Right cardiac atrium (tissue), 5 donors: ENCODE measurements at regions of chr2 and their contacts with region 1.

Region 1: GRCh38 chr2:64488050-64488974 is 34.4 kb downstream of the LGALSL start:
- DNase-seq: peak; percentile 51 to 86 (median 84)
- ATAC-seq: peak; percentile 38 to 71
- H3K4me3 ChIP-seq: no peak overlapping the region
- H3K27ac ChIP-seq: no peak overlapping the region
- H3K4me1 ChIP-seq: no peaks in the 10 kb centered on the region
- H3K27me3 ChIP-seq: no peaks in the 10 kb centered on the region

Region 2: DNA sequence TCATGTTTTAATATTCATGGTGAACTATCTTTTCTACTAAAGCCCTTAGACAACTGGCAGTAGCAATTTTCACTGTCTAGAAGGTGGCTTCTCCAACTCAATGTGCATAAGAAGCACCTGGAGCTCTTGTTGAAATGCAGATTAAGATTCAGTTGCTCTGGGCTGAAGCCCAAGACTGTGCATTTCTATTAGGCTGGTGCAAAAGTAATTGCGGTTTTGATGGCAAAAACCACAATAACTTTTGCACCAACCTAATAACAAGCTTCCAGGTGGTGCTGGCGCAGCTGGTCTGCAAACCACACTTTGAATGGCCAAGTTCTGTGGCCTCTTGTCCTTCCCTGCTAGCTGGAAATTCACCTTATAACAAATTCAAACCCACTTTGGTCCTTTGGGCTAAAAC is 442.4 kb before region 1 on chr2:
- intact Hi-C with region 1: loop called in 2 of 4 experiments (anchors 5 to 10 kb)
- DNase-seq: no peak
- ATAC-seq: no peak
- H3K4me3 ChIP-seq: no peak overlapping the region
- H3K27ac ChIP-seq: no peak overlapping the region
- H3K4me1 ChIP-seq: no peaks in the 10 kb centered on the region
- H3K27me3 ChIP-seq: no peaks in the 10 kb centered on the region